Mammary epithelial cell (primary cell): ENCODE measurements at regions of chr12 and their contacts with region 1.

Region 1: GRCh38 chr12:78863482-78864402 is 832 bp upstream of the SYT1 start:
- DNase-seq: peak; percentile 86
- H3K4me3 ChIP-seq: peak overlapping the region; percentile 68 to 83 (median 82)
- H3K27ac ChIP-seq: peak overlapping the region; percentile 95
- H3K4me1 ChIP-seq: peaks cover 12% of the 10 kb centered on the region
- H3K27me3 ChIP-seq: no peaks in the 10 kb centered on the region
- CTCF ChIP-seq: no peak

Region 2: GRCh38 chr12:78392918-78393317 is 470.8 kb before region 1 on chr12:
- CTCF ChIA-PET with region 1: no interaction called
- dilution Hi-C with region 1: no loop called
- in situ Hi-C with region 1: no loop called
- intact Hi-C with region 1: no loop called
- DNase-seq: peak; percentile 2
- H3K4me3 ChIP-seq: no peak overlapping the region
- H3K27ac ChIP-seq: no peak overlapping the region
- H3K4me1 ChIP-seq: no peaks in the 10 kb centered on the region
- H3K27me3 ChIP-seq: peaks cover 10% of the 10 kb centered on the region
- CTCF ChIP-seq: peak; percentile 2 to 27

Region 3: GRCh38 chr12:78562368-78563205 is 301.2 kb before region 1 on chr12:
- CTCF ChIA-PET with region 1: interaction called, 4 read pairs
- dilution Hi-C with region 1: no loop called
- in situ Hi-C with region 1: no loop called
- intact Hi-C with region 1: loop called (anchors 1 kb)
- DNase-seq: peak; percentile 9
- H3K4me3 ChIP-seq: no peak overlapping the region
- H3K27ac ChIP-seq: no peak overlapping the region
- H3K4me1 ChIP-seq: no peaks in the 10 kb centered on the region
- H3K27me3 ChIP-seq: no peaks in the 10 kb centered on the region
- CTCF ChIP-seq: peak; percentile 39 to 57

Region 4: GRCh38 chr12:78703820-78704525 is 159.8 kb before region 1 on chr12:
- CTCF ChIA-PET with region 1: no interaction called
- dilution Hi-C with region 1: no loop called
- in situ Hi-C with region 1: no loop called
- intact Hi-C with region 1: loop called (anchors 5 kb)
- DNase-seq: peak; percentile 81
- H3K4me3 ChIP-seq: no peak overlapping the region
- H3K27ac ChIP-seq: peak overlapping the region; percentile 80
- H3K4me1 ChIP-seq: peaks cover 17% of the 10 kb centered on the region
- H3K27me3 ChIP-seq: no peaks in the 10 kb centered on the region
- CTCF ChIP-seq: no peak

Region 5: DNA sequence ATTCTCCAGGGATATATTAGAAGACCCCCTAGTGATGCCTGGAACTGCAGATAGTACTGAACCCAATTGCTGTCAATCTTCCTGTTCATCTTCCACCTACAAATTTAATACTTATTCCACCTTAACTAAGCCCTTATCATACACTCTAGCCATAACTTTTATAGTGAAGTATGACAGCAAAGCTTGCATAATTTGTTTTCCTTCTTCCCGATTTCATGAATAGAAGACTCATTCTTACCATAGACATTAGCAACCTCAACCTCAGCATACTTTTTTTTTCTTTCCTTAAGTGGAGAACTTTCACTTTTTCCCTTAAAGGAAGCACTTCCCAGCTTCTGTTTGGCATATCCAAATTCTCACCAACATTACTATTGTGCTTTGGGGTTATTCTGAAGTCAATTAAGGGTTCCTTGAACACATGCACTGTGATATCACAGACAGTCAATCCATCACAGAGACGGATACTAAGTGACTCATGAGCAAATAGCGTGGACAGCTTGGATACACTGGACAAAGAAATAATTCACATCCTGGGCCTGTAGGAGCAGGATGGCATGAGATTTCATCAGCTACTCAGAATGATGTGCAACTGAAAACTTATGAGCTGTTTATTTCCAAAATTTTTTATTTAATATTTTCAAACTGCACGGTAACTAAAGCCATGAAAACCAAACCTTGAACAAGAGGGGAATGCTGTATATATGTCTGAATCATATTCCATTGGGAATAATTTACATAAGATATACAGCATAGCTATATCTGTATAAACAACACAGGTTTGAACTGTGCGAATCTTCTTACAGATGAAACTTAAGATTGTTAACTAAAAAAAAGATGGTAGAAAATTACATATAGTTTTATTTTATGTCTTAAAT is 64.7 kb after region 1 on chr12:
- CTCF ChIA-PET with region 1: no interaction called
- dilution Hi-C with region 1: no loop called
- in situ Hi-C with region 1: no loop called
- intact Hi-C with region 1: loop called (anchors 1 kb)
- DNase-seq: peak; percentile 97
- H3K4me3 ChIP-seq: peak overlapping the region in 2 of 3 experiments; percentile 1 to 23
- H3K27ac ChIP-seq: peak overlapping the region; percentile 97
- H3K4me1 ChIP-seq: peaks cover 18% of the 10 kb centered on the region
- H3K27me3 ChIP-seq: no peaks in the 10 kb centered on the region
- CTCF ChIP-seq: no peak

Region 6: DNA sequence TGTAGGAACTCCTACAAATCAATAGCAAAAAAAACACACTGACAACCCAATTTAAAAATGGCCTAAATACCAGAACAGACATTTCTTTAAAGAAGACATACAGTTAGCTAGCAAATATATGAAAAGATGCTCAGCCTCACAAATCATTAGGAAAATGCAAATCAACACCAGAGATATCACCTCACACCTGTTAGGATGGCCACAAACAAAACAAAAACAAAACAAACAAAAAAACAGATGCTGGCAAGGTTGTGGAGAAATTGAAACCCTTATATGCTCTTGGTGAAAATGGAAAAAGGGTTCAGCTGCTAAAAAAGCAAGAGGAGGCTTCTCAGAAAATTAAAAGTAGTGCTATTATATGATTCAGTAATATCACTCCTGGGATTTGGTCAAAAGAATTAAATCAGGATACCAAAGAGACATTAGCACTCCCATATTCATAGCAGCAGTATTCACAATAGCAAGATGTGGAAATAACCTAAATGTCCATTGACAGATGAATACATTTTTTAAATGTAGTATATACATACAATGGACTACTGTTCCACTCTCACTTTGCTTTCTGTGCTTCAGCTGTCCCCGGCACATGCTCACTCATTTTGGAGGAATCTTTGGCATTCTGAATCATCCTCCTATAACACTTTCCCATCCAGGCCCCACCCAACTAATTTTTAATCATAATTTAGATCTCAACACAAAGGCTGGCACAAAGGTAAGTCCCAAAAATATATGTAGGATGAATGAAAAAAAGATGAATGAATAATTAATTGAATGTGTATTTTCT is 99.9 kb after region 1 on chr12:
- CTCF ChIA-PET with region 1: no interaction called
- dilution Hi-C with region 1: no loop called
- in situ Hi-C with region 1: no loop called
- intact Hi-C with region 1: loop called (anchors 2 kb)
- DNase-seq: peak; percentile 81
- H3K4me3 ChIP-seq: peak overlapping the region in 2 of 3 experiments; percentile 40 to 52
- H3K27ac ChIP-seq: peak overlapping the region; percentile 76
- H3K4me1 ChIP-seq: peaks cover 13% of the 10 kb centered on the region
- H3K27me3 ChIP-seq: no peaks in the 10 kb centered on the region
- CTCF ChIP-seq: no peak

Region 7: DNA sequence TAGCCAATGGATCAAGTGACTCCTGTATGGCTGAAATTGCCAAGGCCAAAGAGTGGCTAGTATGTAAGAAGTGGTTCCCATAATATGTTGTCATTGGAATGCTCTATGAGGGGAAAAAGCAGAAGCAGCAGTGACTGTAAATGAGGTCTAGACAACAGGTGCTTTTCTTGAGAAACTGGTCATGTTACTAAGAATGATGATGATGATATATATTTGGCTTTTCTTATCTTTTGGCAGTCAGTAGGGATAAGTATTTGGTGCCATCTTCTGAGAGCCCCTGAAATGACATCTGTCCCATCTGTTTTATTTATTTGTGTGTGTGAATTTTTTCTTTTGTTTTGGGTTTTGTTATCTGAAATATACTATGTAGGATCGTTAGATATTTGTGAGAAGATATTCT is 142.6 kb after region 1 on chr12:
- CTCF ChIA-PET with region 1: no interaction called
- dilution Hi-C with region 1: no loop called
- in situ Hi-C with region 1: no loop called
- intact Hi-C with region 1: loop called (anchors 5 kb)
- DNase-seq: no peak
- H3K4me3 ChIP-seq: no peak overlapping the region
- H3K27ac ChIP-seq: no peak overlapping the region
- H3K4me1 ChIP-seq: no peaks in the 10 kb centered on the region
- H3K27me3 ChIP-seq: no peaks in the 10 kb centered on the region
- CTCF ChIP-seq: peak; percentile 34 to 46

Region 8: GRCh38 chr12:79127271-79127751 is 263.6 kb after region 1 on chr12:
- CTCF ChIA-PET with region 1: interaction called, 5 read pairs
- dilution Hi-C with region 1: no loop called
- in situ Hi-C with region 1: no loop called
- intact Hi-C with region 1: loop called (anchors 2 kb)
- DNase-seq: peak; percentile 95
- H3K4me3 ChIP-seq: no peak overlapping the region
- H3K27ac ChIP-seq: peak overlapping the region; percentile 10
- H3K4me1 ChIP-seq: peaks cover 19% of the 10 kb centered on the region
- H3K27me3 ChIP-seq: no peaks in the 10 kb centered on the region
- CTCF ChIP-seq: no peak